Sciatic nerve (tissue), 2 donors: ENCODE measurements at regions of chr10 and their contacts with region 1.

Region 1: GRCh38 chr10:58967551-58968388 is 208.7 kb upstream of the PHYHIPL start:
- DNase-seq: no peak
- ATAC-seq: peak; percentile 55

Region 2: DNA sequence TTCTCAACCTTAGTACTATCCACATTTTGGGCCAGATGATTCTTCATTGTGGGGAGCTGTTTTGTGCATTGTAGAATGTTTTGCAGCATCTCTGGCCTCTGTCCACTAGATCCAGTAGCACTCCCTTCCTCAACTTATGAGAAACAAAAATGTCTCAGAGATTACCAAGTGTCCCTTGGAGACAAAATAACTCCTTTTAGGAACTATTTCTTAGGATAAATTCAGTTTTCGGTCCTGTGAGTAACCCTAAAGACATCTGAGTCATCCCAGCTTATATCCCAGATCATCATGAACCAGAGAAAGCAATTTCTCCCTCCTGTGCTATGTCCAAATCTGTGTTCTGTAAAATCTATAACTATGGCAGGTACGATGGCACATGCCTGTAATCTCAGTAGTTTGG is 57.9 kb before region 1 on chr10:
- intact Hi-C with region 1: no loop called
- DNase-seq: no peak
- ATAC-seq: no peak

Region 3: GRCh38 chr10:59234816-59235429 is 267.2 kb after region 1 on chr10:
- intact Hi-C with region 1: loop called (anchors 10 kb)
- DNase-seq: no peak
- ATAC-seq: no peak